ENCODE measurements at regions of chr16 and their contacts with region 1.

Region 1: GRCh38 chr16:50368410-50369132 is at the start of gene BRD7:
- H3K4me3 Mint-ChIP-seq: peak within 1 kb of the TSS; percentile 80
- H3K27ac Mint-ChIP-seq: peak within 1 kb of the TSS; percentile 84
- H3K4me1 Mint-ChIP-seq: peaks cover 38% of the 10 kb centered on the region
- H3K27me3 Mint-ChIP-seq: peaks cover 4% of the 10 kb centered on the region

Region 2: GRCh38 chr16:50152807-50153452 is 215.6 kb before region 1 on chr16 and contains the start of gene TENT4B:
- intact Hi-C with region 1: loop called (anchors 10 kb)
- H3K4me3 Mint-ChIP-seq: peak within 1 kb of the TSS; percentile 93
- H3K27ac Mint-ChIP-seq: peak within 1 kb of the TSS; percentile 91
- H3K4me1 Mint-ChIP-seq: peaks cover 33% of the 10 kb centered on the region
- H3K27me3 Mint-ChIP-seq: no peaks in the 10 kb centered on the region

Region 3: DNA sequence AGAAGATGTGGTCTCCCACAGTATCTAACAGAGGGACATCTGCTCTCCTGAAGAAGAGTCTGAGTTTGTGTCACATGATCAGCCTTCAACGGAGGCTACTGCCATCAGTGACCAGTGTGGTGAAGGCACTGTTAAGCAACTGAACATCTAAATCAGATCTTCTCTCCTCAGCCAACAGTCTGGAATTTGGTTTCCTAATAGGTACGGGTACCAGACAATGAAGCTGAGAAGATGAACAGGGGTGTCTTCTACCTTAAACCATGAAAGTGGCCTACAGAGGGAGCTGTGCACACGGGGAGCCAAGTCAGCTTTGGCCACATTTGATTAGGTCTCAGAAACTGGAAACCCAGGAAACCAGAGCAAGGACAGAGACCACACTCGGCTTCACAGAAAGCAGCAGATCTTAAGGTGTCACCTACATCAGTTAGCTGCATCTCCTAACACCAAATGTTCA is 41.6 kb before region 1 on chr16:
- intact Hi-C with region 1: no loop called
- H3K4me3 Mint-ChIP-seq: no peak overlapping the region
- H3K27ac Mint-ChIP-seq: no peak overlapping the region
- H3K4me1 Mint-ChIP-seq: peaks cover 17% of the 10 kb centered on the region
- H3K27me3 Mint-ChIP-seq: no peaks in the 10 kb centered on the region

Region 4: DNA sequence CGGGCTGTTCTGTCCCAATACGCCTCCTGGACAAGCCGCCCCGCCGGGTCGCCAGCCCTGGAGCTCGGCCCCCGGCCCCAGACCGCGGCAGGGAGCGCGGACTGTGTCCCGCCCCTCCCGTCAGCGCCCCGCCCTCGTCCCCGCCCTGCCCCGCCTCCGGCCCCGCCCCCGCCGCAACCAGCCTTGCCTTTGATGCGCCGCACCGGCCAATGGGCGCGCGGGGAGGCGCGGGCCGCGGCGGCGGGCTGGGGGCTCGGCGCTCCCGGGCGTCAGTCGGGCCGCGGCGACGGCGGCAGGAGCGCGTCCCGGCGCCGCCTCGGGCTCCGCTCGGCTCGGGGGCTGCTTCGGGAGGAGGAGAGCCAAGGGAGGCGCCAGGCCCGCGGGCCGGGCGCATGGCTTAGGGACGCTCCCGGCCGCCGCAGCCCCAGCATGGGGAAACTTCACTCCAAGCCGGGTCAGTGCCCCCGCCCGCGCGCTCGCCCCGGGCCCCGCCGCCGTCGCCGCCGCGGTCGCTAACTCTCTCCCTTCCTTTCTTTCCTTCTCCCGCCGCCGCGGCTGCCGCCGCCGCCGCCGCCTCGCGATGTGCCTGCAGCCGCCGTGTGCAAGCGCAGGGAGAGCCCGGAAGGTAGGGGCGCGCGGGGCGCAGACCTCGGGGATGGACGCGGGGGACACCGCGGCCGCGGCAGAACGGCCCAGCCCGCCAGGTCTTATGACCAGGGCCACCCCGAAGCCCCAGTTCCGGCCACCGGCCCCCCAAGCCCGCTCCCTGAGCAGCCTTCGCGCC is 179.7 kb after region 1 on chr16 and contains the start of gene NKD1:
- intact Hi-C with region 1: loop called (anchors 10 kb)
- H3K4me3 Mint-ChIP-seq: peak within 1 kb of the TSS; percentile 73
- H3K27ac Mint-ChIP-seq: peak within 1 kb of the TSS; percentile 48
- H3K4me1 Mint-ChIP-seq: peaks cover 13% of the 10 kb centered on the region
- H3K27me3 Mint-ChIP-seq: peaks cover 75% of the 10 kb centered on the region

Region 5: DNA sequence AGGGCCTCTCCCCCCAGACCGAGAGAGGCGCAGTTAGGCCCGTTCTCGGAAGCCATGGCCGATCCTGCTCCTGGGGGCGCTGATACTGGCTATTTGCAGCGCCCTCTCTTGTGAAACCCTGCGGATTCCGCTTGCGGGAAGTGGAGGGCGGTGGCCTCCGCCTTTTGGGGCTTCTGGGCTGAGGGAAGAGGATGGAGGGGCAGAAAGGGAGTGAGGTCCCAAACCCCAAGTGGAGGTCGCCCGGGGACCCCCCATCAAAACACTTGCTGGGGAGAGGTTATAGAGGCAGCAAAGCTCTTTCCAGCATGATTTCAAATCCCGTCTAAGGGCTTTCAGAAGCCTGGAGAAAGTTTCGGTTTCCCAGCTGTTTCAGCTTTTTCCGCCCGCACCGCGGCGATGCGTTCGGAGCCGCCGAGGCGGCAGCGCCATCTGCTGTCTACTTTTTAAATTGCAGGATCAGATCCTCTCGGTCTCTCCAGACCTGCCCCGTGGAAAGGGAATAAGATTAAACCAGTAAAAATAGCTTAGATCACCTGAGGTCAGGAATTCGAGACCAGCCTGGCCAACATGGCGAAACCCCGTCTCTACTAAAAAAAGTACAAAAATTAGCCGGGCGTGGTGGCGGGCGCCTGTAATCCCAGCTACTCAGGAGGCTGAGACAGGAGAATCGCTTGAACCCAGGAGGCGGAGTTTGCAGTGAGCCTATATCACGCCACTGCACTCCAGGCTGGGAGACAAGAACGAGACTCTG is 296.7 kb after region 1 on chr16:
- intact Hi-C with region 1: loop called (anchors 10 kb)
- H3K4me3 Mint-ChIP-seq: peak overlapping the region; percentile 81
- H3K27ac Mint-ChIP-seq: peak overlapping the region; percentile 89
- H3K4me1 Mint-ChIP-seq: peaks cover 41% of the 10 kb centered on the region
- H3K27me3 Mint-ChIP-seq: no peaks in the 10 kb centered on the region

Region 6: GRCh38 chr16:50806099-50807062 is 437.8 kb after region 1 on chr16:
- intact Hi-C with region 1: loop called (anchors 10 kb)
- H3K4me3 Mint-ChIP-seq: peak overlapping the region; percentile 51
- H3K27ac Mint-ChIP-seq: no peak overlapping the region
- H3K4me1 Mint-ChIP-seq: peaks cover 8% of the 10 kb centered on the region
- H3K27me3 Mint-ChIP-seq: no peaks in the 10 kb centered on the region